Left ventricle myocardium superior (tissue), 1 donor: ENCODE measurements at regions of chr4 and their contacts with region 1.

Region 1: DNA sequence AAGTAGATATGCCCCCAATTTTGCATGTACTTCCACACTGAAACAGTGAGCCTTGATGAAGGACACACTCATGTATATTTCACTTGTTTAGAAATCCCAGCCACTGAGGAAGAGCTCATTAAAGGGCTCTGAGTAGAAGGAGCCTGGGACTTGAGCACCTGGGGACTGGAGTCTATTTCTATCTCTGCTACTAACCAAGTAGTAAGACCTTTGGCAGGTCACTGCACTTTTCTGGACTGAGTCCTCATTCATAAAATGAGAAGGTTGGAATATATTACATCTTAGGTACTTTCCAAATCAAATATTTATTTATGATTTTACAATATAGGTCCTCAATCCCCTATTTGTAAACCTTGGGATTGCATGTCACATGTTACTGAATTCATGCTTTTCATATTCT is 78.2 kb upstream of the C4orf54 start:
- DNase-seq: no peak
- ATAC-seq: peak; percentile 35

Region 2: GRCh38 chr4:99334880-99335279 is 400.9 kb before region 1 on chr4:
- intact Hi-C with region 1: no loop called
- DNase-seq: no peak
- ATAC-seq: no peak

Region 3: DNA sequence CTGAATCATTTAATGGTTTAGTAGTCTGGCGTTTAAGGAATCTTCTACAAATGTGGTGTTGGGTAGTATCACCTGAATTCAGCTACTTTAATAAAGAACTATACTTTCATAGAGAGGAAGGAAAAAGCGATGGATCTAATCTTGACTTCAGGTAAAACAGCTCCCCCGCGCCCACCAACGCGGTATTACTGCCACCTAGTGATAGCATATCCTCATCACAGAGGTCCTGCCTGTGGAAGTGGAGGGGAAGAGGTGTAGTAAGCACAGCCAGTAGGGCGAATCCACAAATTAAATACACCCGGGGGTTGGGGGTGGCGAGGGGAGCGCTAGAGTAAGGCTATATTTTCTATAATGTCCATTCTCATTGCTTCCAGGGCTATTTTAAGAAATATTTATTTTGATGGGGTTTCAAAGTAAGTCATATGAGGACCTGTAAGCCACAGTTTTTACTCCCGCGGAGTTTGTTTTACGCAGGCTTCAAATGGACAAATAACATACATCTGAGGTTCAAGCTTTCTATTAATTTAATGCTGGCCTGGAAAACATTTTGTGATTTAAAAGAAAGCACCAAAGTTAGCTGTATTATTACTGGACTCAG is 72.5 kb after region 1 on chr4:
- intact Hi-C with region 1: loop called (anchors 10 kb)
- DNase-seq: peak; percentile 70
- ATAC-seq: peak; percentile 79

Region 4: DNA sequence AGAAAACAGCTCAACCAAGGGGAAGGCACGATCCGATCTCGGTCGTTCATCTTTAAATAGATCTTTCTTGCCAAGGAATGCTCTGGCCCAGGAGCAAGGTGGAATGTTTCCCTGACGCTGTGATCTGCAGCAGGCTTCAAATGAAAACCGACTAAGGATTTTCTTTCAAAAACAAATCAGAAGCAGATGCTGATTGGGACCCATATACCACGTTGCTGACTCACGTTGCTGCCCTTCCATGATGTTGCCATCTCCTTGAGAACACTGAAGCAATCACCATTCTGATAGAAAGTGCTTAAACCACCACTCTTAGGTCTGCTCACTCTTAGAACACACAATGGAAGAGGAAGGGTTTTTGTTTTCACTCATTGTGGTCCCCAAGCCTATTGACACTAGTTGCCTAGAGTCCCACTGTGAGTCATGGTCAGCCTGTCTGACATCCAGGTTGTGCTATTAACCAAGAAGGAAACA is 132.3 kb after region 1 on chr4:
- intact Hi-C with region 1: no loop called
- DNase-seq: no peak
- ATAC-seq: peak; percentile 26